Common myeloid progenitor, CD34-positive (primary cell): ENCODE measurements at regions of chr10 and their contacts with region 1.

Region 1: DNA sequence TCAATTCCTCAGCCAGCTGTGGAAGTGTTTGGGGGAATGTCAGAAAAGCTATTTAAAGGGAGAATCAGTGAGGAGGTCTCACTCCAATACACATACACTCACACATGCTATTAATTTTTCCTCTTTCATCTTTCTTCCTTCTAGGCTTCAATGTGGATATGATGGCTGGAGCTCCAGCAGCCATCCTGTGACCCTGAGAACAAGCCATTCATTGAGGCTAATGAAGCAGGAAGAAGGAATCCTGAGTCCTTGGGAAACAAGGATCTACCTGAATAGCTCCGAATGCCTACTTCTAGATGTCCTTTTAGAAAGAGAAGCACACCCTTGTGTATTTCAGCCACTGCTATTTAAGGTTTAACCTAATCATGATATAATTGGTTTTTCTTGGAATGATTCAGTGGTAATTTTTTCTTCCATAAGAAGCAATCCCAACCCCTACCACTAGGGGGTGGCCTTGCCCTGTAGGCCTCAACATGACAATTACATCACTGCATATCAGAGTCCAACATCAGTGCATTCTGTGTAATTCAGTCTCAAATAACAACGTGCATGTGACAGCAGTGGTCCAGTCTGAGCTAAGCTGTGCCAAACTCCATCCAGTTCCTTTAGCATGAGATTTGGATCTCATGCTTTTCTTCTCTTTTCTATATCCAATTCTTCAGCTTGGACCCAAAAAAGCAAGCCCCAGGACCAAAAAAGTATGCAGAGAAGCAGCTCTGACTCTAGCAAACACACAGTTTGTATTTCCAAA is 85.3 kb upstream of the ANKRD1 start:
- DNase-seq: peak; percentile 65 to 79 (median 78)
- H3K4me3 ChIP-seq: no peak overlapping the region
- H3K27ac ChIP-seq: no peak overlapping the region
- H3K4me1 ChIP-seq: no peaks in the 10 kb centered on the region
- H3K27me3 ChIP-seq: no peaks in the 10 kb centered on the region

Region 2: GRCh38 chr10:90912174-90912573 is 94.0 kb before region 1 on chr10:
- CTCF ChIA-PET with region 1: interaction called, 11 read pairs
- POLR2A ChIA-PET with region 1: no interaction called
- DNase-seq: no peak
- H3K4me3 ChIP-seq: no peak overlapping the region
- H3K27ac ChIP-seq: no peak overlapping the region
- H3K4me1 ChIP-seq: no peaks in the 10 kb centered on the region
- H3K27me3 ChIP-seq: peaks cover 0 to 3% (median 0%) of the 10 kb centered on the region in 5 experiments

Region 3: GRCh38 chr10:91017198-91017597 is 11.0 kb after region 1 on chr10:
- CTCF ChIA-PET with region 1: interaction called, 18 read pairs
- POLR2A ChIA-PET with region 1: no interaction called
- DNase-seq: peak in 1 of 3 donors; percentile 3
- H3K4me3 ChIP-seq: no peak overlapping the region
- H3K27ac ChIP-seq: no peak overlapping the region
- H3K4me1 ChIP-seq: no peaks in the 10 kb centered on the region
- H3K27me3 ChIP-seq: no peaks in the 10 kb centered on the region